RWPE1 (cell line): ENCODE measurements at regions of chr2 and their contacts with region 1.

Region 1: DNA sequence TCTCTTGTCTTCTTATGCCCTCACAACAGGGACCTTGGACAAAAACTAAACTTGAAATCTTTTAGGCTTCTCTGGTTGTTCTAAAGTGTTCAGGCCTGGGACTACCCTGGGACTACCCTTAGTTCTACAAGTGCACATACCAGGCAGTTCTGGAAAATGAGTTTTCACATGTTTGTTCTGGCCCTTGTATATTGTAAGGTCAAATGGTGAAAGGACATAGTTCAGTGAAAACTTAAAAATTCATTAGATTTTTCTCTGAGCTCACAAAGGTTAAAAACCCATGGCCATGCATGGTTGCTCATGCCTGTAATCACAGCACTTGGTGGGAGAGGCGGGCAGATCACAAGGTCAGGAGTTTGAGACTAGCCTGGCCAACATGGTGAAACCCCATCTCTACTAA is 875.5 kb upstream of the FAM98A start:
- DNase-seq: no peak
- H3K27ac ChIP-seq: no peak overlapping the region
- CTCF ChIP-seq: no peak

Region 2: DNA sequence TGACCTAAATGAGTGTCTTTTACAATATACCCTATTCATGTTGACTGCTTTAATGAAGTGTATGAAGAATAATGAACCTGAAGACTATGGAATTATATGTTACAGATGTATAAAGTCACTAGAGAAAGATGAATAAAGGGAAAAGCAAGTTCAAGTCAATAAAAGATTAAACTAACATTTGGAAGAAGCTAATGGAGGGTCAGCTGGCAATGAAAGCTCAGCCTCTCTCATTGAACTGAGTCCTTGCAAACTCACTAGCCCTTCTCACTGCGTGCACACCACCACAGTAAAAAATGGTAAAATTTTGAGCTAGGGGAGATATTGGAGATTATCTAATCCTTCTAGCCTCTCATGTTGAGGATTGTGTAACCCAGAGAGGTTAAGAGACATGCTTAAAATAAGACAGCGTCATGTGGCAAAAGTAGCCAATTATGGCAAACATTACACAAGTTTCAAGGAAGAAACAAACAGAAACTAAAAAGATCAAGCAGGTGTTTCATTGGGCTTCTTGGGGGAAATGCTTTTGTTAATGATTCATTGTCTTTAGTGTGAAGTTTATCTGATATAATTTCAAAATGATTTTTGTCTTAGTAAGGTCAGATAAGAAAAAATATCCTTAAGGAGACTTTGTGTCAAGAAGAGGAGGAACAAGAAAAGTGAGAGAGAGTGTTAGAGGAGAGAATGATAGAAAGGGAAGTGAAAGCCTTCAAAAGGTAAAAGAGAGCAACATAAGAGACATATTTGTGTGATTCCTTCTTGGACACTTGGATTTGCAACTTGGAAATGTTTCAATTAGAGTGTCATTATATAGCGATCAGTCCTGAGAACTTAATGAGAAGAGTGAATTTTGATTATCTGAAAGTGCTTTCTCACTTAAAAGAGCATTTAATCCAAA is 18.2 kb after region 1 on chr2:
- CTCF ChIA-PET with region 1: no interaction called
- POLR2A ChIA-PET with region 1: no interaction called
- DNase-seq: no peak
- H3K27ac ChIP-seq: no peak overlapping the region
- CTCF ChIP-seq: no peak

Region 3: DNA sequence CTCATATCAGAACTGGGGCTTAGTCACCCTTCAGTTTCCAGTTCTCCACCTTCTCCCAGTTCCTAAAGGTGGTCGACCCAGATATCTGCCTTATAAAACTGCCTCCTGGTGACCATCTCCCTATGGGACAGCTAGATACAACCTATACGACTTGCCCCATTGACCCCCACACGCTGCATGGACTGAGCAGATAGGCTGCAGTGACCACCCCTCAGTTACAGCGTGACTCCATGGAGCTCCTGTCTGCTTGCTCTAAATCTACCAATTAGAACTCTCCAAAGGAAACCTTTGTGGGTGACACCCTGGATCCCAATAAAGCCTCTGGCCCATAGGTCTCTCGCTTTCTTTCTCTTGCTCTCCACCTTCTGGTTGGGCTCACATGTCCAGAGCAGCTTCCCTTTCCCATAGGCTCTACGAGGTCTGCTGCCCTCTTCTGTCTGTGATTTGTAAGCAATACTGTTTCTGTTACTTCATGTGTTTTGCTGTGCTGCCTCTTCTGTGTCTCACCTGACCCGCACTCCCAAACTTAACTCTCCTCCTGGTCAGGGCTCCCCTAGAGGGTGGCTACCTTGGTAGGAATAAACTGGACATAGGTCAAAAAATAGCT is 95.7 kb after region 1 on chr2:
- CTCF ChIA-PET with region 1: no interaction called
- POLR2A ChIA-PET with region 1: no interaction called
- DNase-seq: peak; percentile 42
- H3K27ac ChIP-seq: no peak overlapping the region
- CTCF ChIP-seq: no peak; the same call in 1 of the 2 replicates

Region 4: GRCh38 chr2:35978218-35978617 is 1503.6 kb after region 1 on chr2:
- CTCF ChIA-PET with region 1: interaction called, 13 read pairs
- POLR2A ChIA-PET with region 1: no interaction called
- DNase-seq: no peak
- H3K27ac ChIP-seq: no peak overlapping the region
- CTCF ChIP-seq: no peak